Activated CD4-positive, alpha-beta T cell treated with anti-CD3 and anti-CD28 coated beads, Interleukin-2, amount 10 ng/mL, durations not matched to agents 24 days and 14 days (primary cell): ENCODE measurements at regions of chr15 and their contacts with region 1.

Region 1: GRCh38 chr15:41989259-41989933 is 17.0 kb upstream of the EHD4 start:
- DNase-seq: peak; percentile 96
- H3K4me3 Mint-ChIP-seq: no peak overlapping the region
- H3K27ac Mint-ChIP-seq: no peak overlapping the region
- H3K4me1 Mint-ChIP-seq: no peaks in the 10 kb centered on the region
- H3K27me3 Mint-ChIP-seq: no peaks in the 10 kb centered on the region

Region 2: GRCh38 chr15:42059661-42060476 is 70.5 kb after region 1 on chr15:
- intact Hi-C with region 1: loop called (anchors 1 kb)
- DNase-seq: peak; percentile 91
- H3K4me3 Mint-ChIP-seq: no peak overlapping the region
- H3K27ac Mint-ChIP-seq: no peak overlapping the region
- H3K4me1 Mint-ChIP-seq: peaks cover 11% of the 10 kb centered on the region
- H3K27me3 Mint-ChIP-seq: peaks cover 33% of the 10 kb centered on the region

Region 3: GRCh38 chr15:42084460-42085235 is 95.3 kb after region 1 on chr15:
- intact Hi-C with region 1: loop called (anchors 1 kb)
- DNase-seq: peak; percentile 84
- H3K4me3 Mint-ChIP-seq: no peak overlapping the region
- H3K27ac Mint-ChIP-seq: no peak overlapping the region
- H3K4me1 Mint-ChIP-seq: peaks cover 3% of the 10 kb centered on the region
- H3K27me3 Mint-ChIP-seq: peaks cover 14% of the 10 kb centered on the region